Sigmoid colon (tissue), 7 donors: ENCODE measurements at regions of chr1 and their contacts with region 1.

Region 1: DNA sequence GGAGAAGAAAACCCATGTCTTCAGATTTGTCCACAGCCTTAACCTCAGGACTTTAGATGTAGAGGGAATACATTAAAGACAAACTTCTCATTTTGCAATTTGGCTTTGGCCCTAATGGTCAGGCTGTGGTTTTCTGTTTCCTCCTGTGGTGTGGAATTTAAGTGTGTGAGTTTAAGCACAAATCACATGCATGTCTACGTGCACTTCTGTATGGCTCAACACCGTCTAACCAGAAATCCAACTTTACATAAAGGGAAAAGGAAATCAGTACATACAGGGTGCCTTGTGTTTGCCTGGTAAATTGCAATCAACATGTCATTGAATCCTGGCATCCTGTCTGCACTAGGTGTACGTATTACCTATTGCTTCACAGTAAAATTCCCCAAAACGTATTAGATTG is 1.2 kb upstream of the ZNF124 start:
- DNase-seq: no peak
- H3K4me3 ChIP-seq: no peak overlapping the region
- H3K27ac ChIP-seq: no peak overlapping the region
- H3K4me1 ChIP-seq: no peaks in the 10 kb centered on the region
- H3K27me3 ChIP-seq: no peaks in the 10 kb centered on the region
- CTCF ChIP-seq: no peak
- EP300 ChIP-seq: no peak
- POLR2A ChIP-seq: no peak

Region 2: GRCh38 chr1:246893191-246893939 is 279.6 kb before region 1 on chr1:
- intact Hi-C with region 1: no loop called
- DNase-seq: no peak
- H3K4me3 ChIP-seq: no peak overlapping the region
- H3K27ac ChIP-seq: no peak overlapping the region
- H3K4me1 ChIP-seq: no peaks in the 10 kb centered on the region
- H3K27me3 ChIP-seq: no peaks in the 10 kb centered on the region
- CTCF ChIP-seq: no peak
- EP300 ChIP-seq: no peak
- POLR2A ChIP-seq: no peak

Region 3: GRCh38 chr1:247210376-247211117 is 37.6 kb after region 1 on chr1:
- intact Hi-C with region 1: loop called (anchors 5 kb)
- DNase-seq: peak; percentile 98
- H3K4me3 ChIP-seq: peak overlapping the region; percentile 82 to 93 (median 86)
- H3K27ac ChIP-seq: peak overlapping the region; percentile 85 to 87 (median 86)
- H3K4me1 ChIP-seq: peaks cover 0 to 16% (median 11%) of the 10 kb centered on the region in 4 donors
- H3K27me3 ChIP-seq: no peaks in the 10 kb centered on the region
- CTCF ChIP-seq: no peak
- EP300 ChIP-seq: no peak
- POLR2A ChIP-seq: peak; percentile 56 to 79

Region 4: DNA sequence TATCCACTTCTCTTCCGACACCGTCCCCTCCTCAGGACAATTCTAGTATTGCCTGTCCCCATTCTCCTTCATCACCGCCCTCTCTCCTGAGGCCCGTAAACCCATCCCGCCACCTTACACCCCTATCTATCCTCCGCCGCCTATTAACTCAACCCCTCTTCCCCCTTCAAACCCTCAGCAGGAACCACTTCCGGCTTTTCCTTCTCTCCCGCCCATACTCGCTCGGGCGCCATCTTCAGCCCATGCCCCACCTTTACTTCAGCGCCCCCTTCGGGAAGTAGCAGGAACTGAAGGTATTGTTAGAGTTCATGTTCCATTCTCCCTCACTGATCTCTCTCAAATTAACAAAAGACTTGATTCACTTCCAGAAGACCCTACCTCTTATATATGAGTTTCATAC is 114.5 kb after region 1 on chr1:
- intact Hi-C with region 1: no loop called
- DNase-seq: no peak
- H3K4me3 ChIP-seq: no peak overlapping the region
- H3K27ac ChIP-seq: no peak overlapping the region
- H3K4me1 ChIP-seq: no peaks in the 10 kb centered on the region
- H3K27me3 ChIP-seq: no peaks in the 10 kb centered on the region
- CTCF ChIP-seq: no peak
- EP300 ChIP-seq: no peak
- POLR2A ChIP-seq: no peak